OCI-LY7 (cell line): ENCODE measurements at regions of chr10 and their contacts with region 1.

Region 1: GRCh38 chr10:37588299-37588698 is 269.1 kb downstream of the ZNF248 start:
- DNase-seq: no peak
- H3K4me3 ChIP-seq: no peak overlapping the region
- H3K27ac ChIP-seq: no peak overlapping the region
- H3K4me1 ChIP-seq: no peaks in the 10 kb centered on the region
- CTCF ChIP-seq: no peak

Region 2: GRCh38 chr10:37549054-37549453 is 39.2 kb before region 1 on chr10:
- CTCF ChIA-PET with region 1: no interaction called
- POLR2A ChIA-PET with region 1: no interaction called
- intact Hi-C with region 1: no loop called
- DNase-seq: no peak
- H3K4me3 ChIP-seq: no peak overlapping the region
- H3K27ac ChIP-seq: no peak overlapping the region
- H3K4me1 ChIP-seq: no peaks in the 10 kb centered on the region
- CTCF ChIP-seq: no peak

Region 3: DNA sequence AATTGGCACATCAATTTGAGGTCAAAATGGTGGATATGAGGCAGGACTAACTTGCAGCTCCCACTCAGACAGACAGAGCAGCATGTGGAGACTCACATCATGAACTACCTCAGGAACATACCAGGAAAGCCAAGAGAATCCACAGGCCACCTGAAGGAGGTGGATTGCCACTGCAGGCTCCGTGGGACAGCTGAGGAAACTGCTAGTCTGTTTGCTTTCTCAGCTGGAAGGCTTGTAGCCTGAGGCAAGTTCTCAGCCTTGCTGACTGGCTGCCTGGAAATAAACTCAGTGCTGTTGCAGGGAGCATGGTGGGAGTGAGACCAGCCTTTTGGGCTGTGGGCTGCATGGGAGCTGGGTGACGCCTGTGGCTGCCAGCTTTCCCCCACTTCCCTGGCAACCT is 66.2 kb after region 1 on chr10:
- CTCF ChIA-PET with region 1: no interaction called
- POLR2A ChIA-PET with region 1: no interaction called
- intact Hi-C with region 1: loop called (anchors 10 kb)
- DNase-seq: no peak
- H3K4me3 ChIP-seq: no peak overlapping the region
- H3K27ac ChIP-seq: no peak overlapping the region
- H3K4me1 ChIP-seq: no peaks in the 10 kb centered on the region
- CTCF ChIP-seq: no peak